GM18951 (cell line): ENCODE measurements at regions of chr9 and their contacts with region 1.

Region 1: DNA sequence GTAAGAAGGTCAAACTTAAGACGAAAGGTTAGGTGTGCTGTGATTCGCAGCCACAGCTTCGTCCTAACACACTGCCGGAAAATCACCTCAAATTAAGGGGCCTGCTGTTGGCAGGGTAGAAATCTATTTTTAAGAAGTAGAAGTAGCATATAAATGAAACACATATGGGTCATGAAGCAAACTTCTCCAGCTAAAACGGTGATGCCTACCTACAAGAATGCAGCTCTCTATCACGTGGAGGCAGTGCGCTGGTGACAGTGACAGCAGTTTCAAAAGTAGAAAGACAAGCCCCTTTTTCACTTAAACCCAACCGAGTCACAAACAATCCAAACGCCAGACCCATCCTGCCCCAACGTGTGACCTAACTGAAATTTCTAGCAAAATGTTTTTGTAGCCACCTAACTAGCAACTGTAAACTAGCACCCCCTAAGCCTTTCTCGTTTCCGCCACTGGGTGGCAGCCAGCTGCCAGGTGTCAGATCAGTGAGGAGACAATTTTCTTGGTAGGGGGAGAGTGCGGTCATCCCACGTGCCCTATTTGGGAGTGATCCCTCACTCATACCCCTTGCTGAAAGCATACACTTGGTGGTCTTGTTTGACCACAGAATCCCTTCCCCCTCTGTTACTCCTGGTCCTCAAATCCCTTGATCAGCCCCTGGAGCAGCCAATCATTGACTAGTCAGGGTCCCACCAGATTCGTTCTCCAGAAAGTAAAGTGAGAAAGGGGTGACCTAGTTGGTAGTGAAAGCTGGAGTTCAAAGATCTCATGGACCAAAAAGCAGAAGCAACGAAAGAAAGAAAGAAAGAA is 71.8 kb upstream of the MAMDC2 start:
- POLR2A ChIP-seq: no peak

Region 2: DNA sequence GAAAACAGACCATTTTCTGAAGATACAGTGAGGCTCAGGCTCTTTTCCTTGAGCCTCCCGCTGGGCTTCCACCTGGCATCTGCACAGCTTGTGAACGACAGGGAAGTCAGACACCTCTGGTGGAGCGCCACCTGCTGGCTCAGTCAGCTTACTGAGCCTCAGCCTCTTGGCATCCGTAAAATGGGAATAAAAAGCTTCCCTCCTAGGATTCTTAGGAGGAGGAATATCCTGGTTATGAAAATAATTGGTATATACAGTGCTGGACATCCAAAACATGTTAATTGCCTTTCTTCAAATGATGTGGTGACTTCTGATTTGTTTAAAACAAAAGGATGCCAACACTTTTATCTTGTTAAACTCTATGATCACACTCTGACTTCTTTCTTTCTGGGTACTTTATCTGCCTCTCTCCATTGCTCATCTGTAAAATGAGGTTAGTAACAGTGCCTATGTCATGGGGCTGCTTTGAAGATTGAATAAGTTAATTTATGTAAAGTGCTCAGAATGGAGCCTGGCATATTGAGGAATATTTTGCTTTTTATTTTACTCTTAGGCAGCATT is 139.3 kb after region 1 on chr9:
- in situ Hi-C with region 1: loop called (anchors 10 kb)
- POLR2A ChIP-seq: no peak